ENCODE measurements at regions of chr3 and their contacts with region 1.

Region 1: GRCh38 chr3:188061133-188061532 is 92.8 kb upstream of the LPP start:
- DNase-seq: peak; percentile 76
- ATAC-seq: peak; percentile 98
- H3K4me3 Mint-ChIP-seq: peak overlapping the region; percentile 25
- H3K27ac Mint-ChIP-seq: peak overlapping the region; percentile 77
- H3K4me1 Mint-ChIP-seq: peaks cover 35% of the 10 kb centered on the region
- H3K27me3 Mint-ChIP-seq: no peaks in the 10 kb centered on the region

Region 2: GRCh38 chr3:186909078-186909853 is 1151.9 kb before region 1 on chr3:
- CTCF ChIA-PET with region 1: no interaction called
- POLR2A ChIA-PET with region 1: no interaction called
- intact Hi-C with region 1: no loop called
- DNase-seq: peak; percentile 82
- ATAC-seq: peak; percentile 84
- H3K4me3 Mint-ChIP-seq: peak overlapping the region; percentile 49
- H3K27ac Mint-ChIP-seq: peak overlapping the region; percentile 93
- H3K4me1 Mint-ChIP-seq: peaks cover 18% of the 10 kb centered on the region
- H3K27me3 Mint-ChIP-seq: no peaks in the 10 kb centered on the region

Region 3: DNA sequence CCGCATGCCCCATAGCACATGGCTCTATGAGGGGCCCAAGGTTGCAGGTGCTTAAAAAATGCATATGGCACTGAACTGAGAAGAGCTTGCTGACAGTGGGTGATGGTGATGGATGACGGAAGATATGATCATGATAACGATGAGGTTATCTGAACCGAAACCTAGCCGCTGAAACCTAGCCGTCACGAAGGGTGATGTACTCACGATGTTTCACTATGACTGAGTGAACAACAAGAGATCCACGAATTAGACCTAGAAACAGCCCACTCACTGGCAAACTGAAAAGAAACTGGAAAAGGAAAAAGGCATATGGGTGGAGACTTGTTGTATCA is 258.2 kb before region 1 on chr3:
- CTCF ChIA-PET with region 1: no interaction called
- POLR2A ChIA-PET with region 1: no interaction called
- intact Hi-C with region 1: loop called in 1 of 2 experiments (anchors 1 kb)
- DNase-seq: peak; percentile 86
- ATAC-seq: peak; percentile 60
- H3K4me3 Mint-ChIP-seq: peak overlapping the region; percentile 34
- H3K27ac Mint-ChIP-seq: peak overlapping the region; percentile 81
- H3K4me1 Mint-ChIP-seq: peaks cover 93% of the 10 kb centered on the region
- H3K27me3 Mint-ChIP-seq: no peaks in the 10 kb centered on the region

Region 4: DNA sequence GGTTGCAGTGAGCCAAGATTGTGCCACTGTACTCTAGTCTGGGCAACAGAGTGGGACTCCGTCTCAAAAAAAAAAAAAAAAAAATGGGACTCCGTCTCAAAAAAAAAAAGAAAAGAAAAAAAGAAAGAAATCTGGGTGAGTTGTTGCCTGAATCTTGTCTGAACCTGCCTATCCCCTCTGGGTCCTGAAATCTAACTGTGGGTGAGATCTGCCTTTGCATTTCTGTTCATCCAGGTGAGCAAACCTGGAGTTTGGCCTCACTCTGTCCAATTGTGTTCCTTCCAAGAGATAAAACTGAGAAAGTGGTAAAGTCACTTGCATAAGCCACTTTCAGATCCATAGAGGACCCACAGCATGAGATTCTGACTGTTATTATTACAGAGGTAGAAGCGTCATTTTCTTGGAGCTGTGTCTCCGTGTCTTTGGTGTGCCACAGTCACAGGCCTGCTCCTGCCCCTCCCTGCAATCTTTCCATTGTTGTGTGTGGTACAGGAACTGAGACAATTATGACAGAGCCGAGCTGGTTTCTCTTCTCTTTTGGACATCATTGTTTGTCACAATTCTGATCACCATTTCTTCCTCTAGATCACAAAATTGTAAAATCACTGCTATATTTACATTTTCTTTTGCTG is 328.7 kb after region 1 on chr3:
- CTCF ChIA-PET with region 1: no interaction called
- POLR2A ChIA-PET with region 1: no interaction called
- intact Hi-C with region 1: loop called in 1 of 2 experiments (anchors 5 kb)
- DNase-seq: peak; percentile 81
- ATAC-seq: peak; percentile 92
- H3K4me3 Mint-ChIP-seq: peak overlapping the region; percentile 22
- H3K27ac Mint-ChIP-seq: peak overlapping the region; percentile 78
- H3K4me1 Mint-ChIP-seq: peaks cover 41% of the 10 kb centered on the region
- H3K27me3 Mint-ChIP-seq: no peaks in the 10 kb centered on the region

Region 5: DNA sequence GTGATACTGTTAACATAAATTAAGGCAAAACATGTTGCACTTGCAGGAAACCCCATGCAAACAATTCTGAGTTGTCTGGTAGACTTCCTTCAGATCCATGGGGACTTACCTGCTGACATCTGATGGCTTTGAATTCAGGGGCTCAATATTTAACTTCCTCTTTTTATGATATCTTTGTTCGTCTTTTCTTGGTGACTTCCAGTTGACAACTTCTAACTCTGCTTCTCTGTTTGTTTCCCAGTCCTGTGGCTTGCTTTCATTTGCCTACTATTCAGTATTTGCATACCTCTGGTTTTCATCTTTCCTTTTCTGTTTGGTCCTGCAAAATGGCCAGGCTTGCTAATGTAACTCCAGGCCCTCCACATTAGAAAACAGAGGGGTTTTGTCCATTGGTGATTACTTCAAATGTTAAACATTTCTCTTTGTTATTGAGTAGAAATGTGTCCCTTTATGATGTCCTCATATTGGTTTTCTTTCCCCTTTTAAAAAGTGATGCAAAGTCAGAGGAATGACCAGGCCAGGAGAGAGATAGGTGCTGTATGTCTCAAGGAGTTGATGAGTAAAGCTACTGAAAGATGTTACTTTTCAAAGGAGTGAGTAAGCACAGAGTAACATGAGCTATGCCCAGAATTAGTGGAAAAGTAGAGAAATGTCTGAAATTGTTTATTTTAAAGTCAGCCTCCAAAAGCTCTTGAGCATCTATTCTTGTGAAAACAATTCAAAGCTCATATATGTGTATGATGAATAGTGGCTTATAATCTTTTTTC is 428.7 kb after region 1 on chr3:
- CTCF ChIA-PET with region 1: no interaction called
- POLR2A ChIA-PET with region 1: no interaction called
- intact Hi-C with region 1: no loop called
- DNase-seq: no peak
- ATAC-seq: peak; percentile 58
- H3K4me3 Mint-ChIP-seq: no peak overlapping the region
- H3K27ac Mint-ChIP-seq: no peak overlapping the region
- H3K4me1 Mint-ChIP-seq: peaks cover 4% of the 10 kb centered on the region
- H3K27me3 Mint-ChIP-seq: no peaks in the 10 kb centered on the region